ENCODE measurements at regions of chrX and their contacts with region 1.

Region 1: GRCh38 chrX:18390941-18391538 is 34.4 kb upstream of the CDKL5 start:
- DNase-seq: peak; percentile 70
- H3K4me3 ChIP-seq: no peak overlapping the region
- H3K27ac ChIP-seq: no peak overlapping the region
- H3K4me1 ChIP-seq: no peaks in the 10 kb centered on the region
- H3K27me3 ChIP-seq: no peaks in the 10 kb centered on the region
- CTCF ChIP-seq: peak; percentile 79

Region 2: GRCh38 chrX:18434894-18435293 is 43.9 kb after region 1 on chrX:
- intact Hi-C with region 1: no loop called
- DNase-seq: no peak
- H3K4me3 ChIP-seq: no peak overlapping the region
- H3K27ac ChIP-seq: no peak overlapping the region
- H3K4me1 ChIP-seq: no peaks in the 10 kb centered on the region
- H3K27me3 ChIP-seq: no peaks in the 10 kb centered on the region
- CTCF ChIP-seq: no peak

Region 3: GRCh38 chrX:18931972-18932371 is 540.9 kb after region 1 on chrX:
- intact Hi-C with region 1: loop called (anchors 10 kb)
- DNase-seq: peak; percentile 20
- H3K4me3 ChIP-seq: no peak overlapping the region
- H3K27ac ChIP-seq: no peak overlapping the region
- H3K4me1 ChIP-seq: no peaks in the 10 kb centered on the region
- H3K27me3 ChIP-seq: no peaks in the 10 kb centered on the region
- CTCF ChIP-seq: no peak

Region 4: DNA sequence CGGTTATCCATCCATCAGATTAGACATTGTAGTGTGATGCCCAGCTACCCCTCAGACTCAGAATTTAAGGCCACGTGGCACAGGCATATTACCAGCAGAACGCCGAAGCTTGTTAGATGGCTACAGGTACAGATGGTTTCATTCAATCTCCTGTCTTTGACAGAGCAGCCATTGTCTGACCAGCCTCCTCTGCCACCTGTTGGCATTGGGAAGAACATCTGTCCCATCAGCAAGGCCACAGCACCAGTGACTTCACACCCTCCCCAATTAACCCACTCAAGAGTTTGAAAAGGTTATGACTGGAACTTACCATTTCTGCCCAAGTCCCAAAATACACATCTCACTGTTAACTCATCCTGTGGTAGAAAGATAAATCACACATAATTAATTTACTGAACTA is 614.9 kb after region 1 on chrX:
- intact Hi-C with region 1: loop called (anchors 10 kb)
- DNase-seq: no peak
- H3K4me3 ChIP-seq: no peak overlapping the region
- H3K27ac ChIP-seq: no peak overlapping the region
- H3K4me1 ChIP-seq: no peaks in the 10 kb centered on the region
- H3K27me3 ChIP-seq: no peaks in the 10 kb centered on the region
- CTCF ChIP-seq: peak; percentile 17

Region 5: GRCh38 chrX:19086102-19086772 is 695.2 kb after region 1 on chrX:
- intact Hi-C with region 1: no loop called
- DNase-seq: no peak
- H3K4me3 ChIP-seq: no peak overlapping the region
- H3K27ac ChIP-seq: no peak overlapping the region
- H3K4me1 ChIP-seq: no peaks in the 10 kb centered on the region
- H3K27me3 ChIP-seq: no peaks in the 10 kb centered on the region
- CTCF ChIP-seq: no peak

Region 6: GRCh38 chrX:19156186-19156585 is 765.1 kb after region 1 on chrX:
- intact Hi-C with region 1: no loop called
- DNase-seq: peak; percentile 21
- H3K4me3 ChIP-seq: no peak overlapping the region
- H3K27ac ChIP-seq: no peak overlapping the region
- H3K4me1 ChIP-seq: no peaks in the 10 kb centered on the region
- H3K27me3 ChIP-seq: no peaks in the 10 kb centered on the region
- CTCF ChIP-seq: no peak

Region 7: GRCh38 chrX:19334945-19335626 is 944.0 kb after region 1 on chrX:
- intact Hi-C with region 1: loop called (anchors 5 kb)
- DNase-seq: no peak
- H3K4me3 ChIP-seq: no peak overlapping the region
- H3K27ac ChIP-seq: no peak overlapping the region
- H3K4me1 ChIP-seq: no peaks in the 10 kb centered on the region
- H3K27me3 ChIP-seq: no peaks in the 10 kb centered on the region
- CTCF ChIP-seq: peak; percentile 42

Measured in colonic mucosa (tissue), 4 donors.